ENCODE measurements at regions of chr4 and their contacts with region 1.

Region 1: DNA sequence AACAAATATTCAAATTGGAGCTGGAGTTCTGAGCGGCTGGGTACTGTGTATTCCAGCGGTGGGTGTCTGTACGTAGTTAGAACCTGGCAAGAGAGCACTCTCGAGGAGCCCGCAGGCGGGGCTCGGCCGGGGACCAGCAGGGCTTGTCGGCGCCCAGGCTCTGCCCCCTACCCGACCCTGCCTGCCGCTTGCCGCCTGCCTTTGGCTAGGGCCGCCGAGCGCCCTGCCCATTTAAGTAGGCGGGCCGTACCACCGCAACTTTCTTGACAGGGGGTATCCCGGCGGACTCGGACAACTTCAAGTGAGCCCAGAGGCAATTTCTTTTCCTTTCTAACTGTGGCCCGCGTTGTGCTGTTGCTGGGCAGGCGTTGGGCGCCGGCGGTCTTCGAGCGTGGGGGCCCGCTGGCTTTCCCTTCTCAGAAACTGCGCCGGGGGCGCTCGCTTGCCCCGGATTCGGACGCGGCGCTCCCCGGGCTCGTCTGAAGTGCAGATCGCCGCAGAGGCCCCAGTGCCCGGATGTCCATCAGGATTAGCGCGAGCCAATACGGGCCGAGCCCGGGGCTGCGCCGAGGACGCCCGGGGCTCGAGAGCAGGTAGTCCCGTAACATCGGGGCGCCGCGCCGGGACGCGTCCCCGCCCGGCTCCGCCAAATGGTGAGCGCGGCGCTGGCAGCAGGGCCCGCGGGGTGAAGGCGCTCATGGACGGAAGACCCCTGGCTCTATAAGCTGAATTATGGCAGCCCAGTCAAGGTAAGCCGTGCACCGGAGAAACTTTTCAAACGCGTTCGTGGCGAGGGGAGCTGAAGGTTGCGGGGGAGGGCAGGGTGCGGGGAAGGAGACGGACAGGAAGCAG is 72.1 kb downstream of the AFF1 start:
- DNase-seq: peak; percentile 87 to 92
- H3K4me3 ChIP-seq: peak overlapping the region; percentile 80 to 84 (median 84)
- H3K27ac ChIP-seq: peak overlapping the region; percentile 96 to 97
- H3K4me1 ChIP-seq: peaks cover 0 to 4% of the 10 kb centered on the region in 2 donors
- H3K27me3 ChIP-seq: no peaks in the 10 kb centered on the region
- CTCF ChIP-seq: peak in 2 of 3 donors; percentile 46 to 61
- POLR2A ChIP-seq: peak; percentile 95

Region 2: GRCh38 chr4:87026800-87027495 is 20.0 kb after region 1 on chr4:
- intact Hi-C with region 1: no loop called
- DNase-seq: no peak
- H3K4me3 ChIP-seq: no peak overlapping the region
- H3K27ac ChIP-seq: peak overlapping the region; percentile 26 to 64
- H3K4me1 ChIP-seq: peaks cover 2 to 17% of the 10 kb centered on the region in 2 donors
- H3K27me3 ChIP-seq: no peaks in the 10 kb centered on the region
- CTCF ChIP-seq: no peak
- POLR2A ChIP-seq: no peak

Region 3: GRCh38 chr4:87093443-87094123 is 86.7 kb after region 1 on chr4:
- intact Hi-C with region 1: loop called (anchors 5 kb)
- DNase-seq: no peak
- H3K4me3 ChIP-seq: no peak overlapping the region
- H3K27ac ChIP-seq: peak overlapping the region; percentile 57
- H3K4me1 ChIP-seq: peaks cover 0 to 6% of the 10 kb centered on the region in 2 donors
- H3K27me3 ChIP-seq: no peaks in the 10 kb centered on the region
- CTCF ChIP-seq: peak; percentile 26 to 35 (median 33)
- POLR2A ChIP-seq: no peak

Region 4: DNA sequence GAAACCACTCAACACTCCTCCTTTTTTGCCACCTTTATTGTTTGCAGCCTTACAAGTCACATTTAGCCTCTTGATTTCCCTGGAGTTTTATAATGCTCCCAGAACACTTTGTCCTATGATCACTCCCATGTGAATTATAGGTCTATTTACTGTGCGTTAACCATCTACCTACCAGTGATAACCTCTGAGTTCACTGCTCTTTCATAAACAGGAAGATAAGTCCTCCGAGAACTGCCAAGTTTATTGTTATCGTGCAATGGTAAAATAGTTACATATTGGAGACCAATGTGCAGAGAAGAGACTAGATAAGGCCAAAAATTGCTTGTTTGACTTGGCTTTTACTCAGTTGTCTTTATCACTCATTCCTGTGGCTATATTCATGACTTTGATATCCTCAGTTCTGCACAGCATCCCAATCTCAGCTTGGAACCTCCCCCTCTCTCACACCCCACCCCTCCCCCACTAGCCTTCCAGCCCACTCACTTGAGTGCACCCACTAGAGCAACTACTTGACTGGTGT is 402.6 kb after region 1 on chr4:
- intact Hi-C with region 1: no loop called
- DNase-seq: no peak
- H3K4me3 ChIP-seq: no peak overlapping the region
- H3K27ac ChIP-seq: no peak overlapping the region
- H3K4me1 ChIP-seq: no peaks in the 10 kb centered on the region
- H3K27me3 ChIP-seq: peaks cover 0 to 6% of the 10 kb centered on the region in 2 donors
- CTCF ChIP-seq: no peak
- POLR2A ChIP-seq: no peak

Measured in breast epithelium (tissue), 4 donors.